Caco-2 (cell line): ENCODE measurements at regions of chr4 and their contacts with region 1.

Region 1: DNA sequence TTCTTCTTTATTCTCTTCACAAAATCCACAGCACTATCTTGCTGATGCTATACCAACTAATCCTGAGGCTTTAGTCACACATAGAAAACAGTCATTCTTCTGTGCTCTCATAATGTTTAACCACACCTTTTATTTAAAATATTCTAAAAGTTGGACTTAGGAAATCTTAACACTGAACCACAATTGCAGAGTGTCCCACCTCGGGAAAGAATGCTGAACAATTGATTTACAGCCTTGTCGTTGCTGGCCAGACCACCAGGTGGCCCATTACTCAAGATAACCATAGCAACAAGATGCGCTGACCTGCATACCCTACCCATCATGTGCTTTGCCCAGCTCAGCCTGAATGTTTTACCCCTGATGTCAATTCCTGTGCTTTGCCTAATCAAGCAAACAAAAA is 100.8 kb downstream of the ARSJ start:
- DNase-seq: peak; percentile 74 to 75
- H3K4me3 ChIP-seq: no peak overlapping the region
- H3K4me3 Mint-ChIP-seq: no peak overlapping the region
- H3K27ac Mint-ChIP-seq: no peak overlapping the region
- H3K4me1 ChIP-seq: no peaks in the 10 kb centered on the region
- H3K4me1 Mint-ChIP-seq: peaks cover 9% of the 10 kb centered on the region
- H3K27me3 ChIP-seq: no peaks in the 10 kb centered on the region
- H3K27me3 Mint-ChIP-seq: no peaks in the 10 kb centered on the region
- CTCF ChIP-seq: peak; percentile 60 to 76

Region 2: GRCh38 chr4:113866611-113867010 is 12.1 kb before region 1 on chr4:
- CTCF ChIA-PET with region 1: no interaction called
- POLR2A ChIA-PET with region 1: no interaction called
- intact Hi-C with region 1: no loop called
- DNase-seq: no peak
- H3K4me3 ChIP-seq: no peak overlapping the region
- H3K4me3 Mint-ChIP-seq: no peak overlapping the region
- H3K27ac Mint-ChIP-seq: no peak overlapping the region
- H3K4me1 ChIP-seq: no peaks in the 10 kb centered on the region
- H3K4me1 Mint-ChIP-seq: no peaks in the 10 kb centered on the region
- H3K27me3 ChIP-seq: no peaks in the 10 kb centered on the region
- H3K27me3 Mint-ChIP-seq: no peaks in the 10 kb centered on the region
- CTCF ChIP-seq: no peak

Region 3: DNA sequence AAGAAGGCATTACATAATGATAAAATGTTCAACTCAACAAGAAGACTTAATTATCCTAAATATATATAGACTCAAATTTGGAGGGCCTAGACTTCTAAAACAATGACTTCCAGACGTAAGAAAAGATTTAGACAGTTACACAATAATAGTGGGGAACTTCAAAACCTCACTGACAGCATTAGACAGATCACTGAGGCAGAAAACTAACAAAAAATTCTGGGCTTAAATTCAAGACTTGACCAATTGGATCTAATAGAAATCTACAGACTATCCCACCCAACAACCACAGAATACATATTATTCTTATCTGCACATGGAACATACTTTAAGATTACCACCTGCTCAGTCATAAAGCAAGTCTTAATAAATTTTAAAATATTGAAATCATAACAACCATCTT is 194.1 kb after region 1 on chr4:
- CTCF ChIA-PET with region 1: interaction called, 3 read pairs
- POLR2A ChIA-PET with region 1: no interaction called
- intact Hi-C with region 1: loop called (anchors 2 kb)
- DNase-seq: no peak
- H3K4me3 ChIP-seq: no peak overlapping the region
- H3K4me3 Mint-ChIP-seq: no peak overlapping the region
- H3K27ac Mint-ChIP-seq: no peak overlapping the region
- H3K4me1 ChIP-seq: no peaks in the 10 kb centered on the region
- H3K4me1 Mint-ChIP-seq: no peaks in the 10 kb centered on the region
- H3K27me3 ChIP-seq: no peaks in the 10 kb centered on the region
- H3K27me3 Mint-ChIP-seq: no peaks in the 10 kb centered on the region
- CTCF ChIP-seq: no peak